Adrenal gland (tissue), 19 donors: ENCODE measurements at regions of chr2 and their contacts with region 1.

Region 1: GRCh38 chr2:66686755-66687154 is 251.8 kb downstream of the MEIS1 start:
- DNase-seq: no peak
- H3K4me3 ChIP-seq: no peak overlapping the region
- H3K27ac ChIP-seq: peak overlapping the region in 3 of 5 donors; percentile 23 to 77 (median 70)
- H3K4me1 ChIP-seq: peaks cover 17 to 22% of the 10 kb centered on the region in 2 donors
- H3K27me3 ChIP-seq: no peaks in the 10 kb centered on the region
- CTCF ChIP-seq: no peak
- POLR2A ChIP-seq: no peak

Region 2: GRCh38 chr2:66439812-66440542 is 246.8 kb before region 1 on chr2:
- intact Hi-C with region 1: loop called (anchors 5 kb)
- DNase-seq: peak in 3 of 7 donors; percentile 26 to 58 (median 30)
- H3K4me3 ChIP-seq: peak overlapping the region; percentile 42 to 71 (median 56)
- H3K27ac ChIP-seq: peak overlapping the region; percentile 10 to 96 (median 93)
- H3K4me1 ChIP-seq: peaks cover 4 to 8% of the 10 kb centered on the region in 2 donors
- H3K27me3 ChIP-seq: no peaks in the 10 kb centered on the region
- CTCF ChIP-seq: no peak
- POLR2A ChIP-seq: no peak

Region 3: GRCh38 chr2:66569321-66569851 is 117.4 kb before region 1 on chr2:
- intact Hi-C with region 1: no loop called
- DNase-seq: peak in 2 of 7 donors; percentile 28 to 65
- H3K4me3 ChIP-seq: no peak overlapping the region
- H3K27ac ChIP-seq: peak overlapping the region in 1 of 5 donors; percentile 47
- H3K4me1 ChIP-seq: peaks cover 17 to 69% of the 10 kb centered on the region in 2 donors
- H3K27me3 ChIP-seq: no peaks in the 10 kb centered on the region
- CTCF ChIP-seq: no peak
- POLR2A ChIP-seq: no peak